PC-9 (cell line): ENCODE measurements at regions of chr11 and their contacts with region 1.

Region 1: GRCh38 chr11:123511037-123511870 is 81.2 kb downstream of the GRAMD1B start:
- DNase-seq: peak; percentile 68 to 84
- H3K4me3 ChIP-seq: no peak overlapping the region
- H3K27ac ChIP-seq: no peak overlapping the region
- H3K4me1 ChIP-seq: no peaks in the 10 kb centered on the region
- H3K27me3 ChIP-seq: no peaks in the 10 kb centered on the region
- CTCF ChIP-seq: peak; percentile 94

Region 2: DNA sequence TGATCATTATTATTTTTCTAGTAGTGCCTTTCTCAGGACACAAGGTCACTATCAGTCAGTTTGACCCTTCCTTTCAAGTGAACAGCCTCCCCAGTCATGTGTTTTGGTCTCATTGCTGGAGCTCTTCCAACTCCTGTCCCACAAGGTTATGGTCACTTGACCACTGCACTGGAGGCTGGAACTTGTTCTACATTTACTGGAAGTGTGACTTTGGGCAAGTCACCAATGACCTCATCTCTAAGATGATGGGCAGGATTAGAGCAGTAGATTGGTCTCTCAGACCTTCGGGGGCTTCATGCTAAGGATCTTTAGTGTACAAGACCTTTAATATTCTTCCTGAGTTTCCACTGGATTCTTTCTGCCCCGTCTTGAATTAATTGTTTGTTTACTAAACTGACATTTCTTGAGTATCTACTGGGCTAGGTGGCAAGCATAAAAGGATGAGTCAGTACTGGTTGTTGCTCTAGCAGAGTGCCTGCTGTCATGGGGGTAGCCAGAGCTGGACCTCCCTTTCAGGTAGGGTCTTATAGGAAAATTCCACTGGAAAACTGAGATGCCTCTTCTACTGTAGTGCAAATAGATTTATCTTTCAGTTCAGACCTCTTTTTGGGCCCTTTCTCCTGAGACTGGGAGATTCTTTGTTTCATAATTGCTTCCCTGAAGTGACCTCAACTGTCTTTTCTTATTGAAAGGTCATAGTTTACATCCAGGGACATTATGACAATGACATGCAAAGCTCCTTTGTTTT is 25.6 kb after region 1 on chr11:
- CTCF ChIA-PET with region 1: interaction called, 18 read pairs
- POLR2A ChIA-PET with region 1: no interaction called
- intact Hi-C with region 1: no loop called
- DNase-seq: no peak
- H3K4me3 ChIP-seq: no peak overlapping the region
- H3K27ac ChIP-seq: peak overlapping the region; percentile 36
- H3K4me1 ChIP-seq: peaks cover 30% of the 10 kb centered on the region
- H3K27me3 ChIP-seq: no peaks in the 10 kb centered on the region
- CTCF ChIP-seq: no peak

Region 3: DNA sequence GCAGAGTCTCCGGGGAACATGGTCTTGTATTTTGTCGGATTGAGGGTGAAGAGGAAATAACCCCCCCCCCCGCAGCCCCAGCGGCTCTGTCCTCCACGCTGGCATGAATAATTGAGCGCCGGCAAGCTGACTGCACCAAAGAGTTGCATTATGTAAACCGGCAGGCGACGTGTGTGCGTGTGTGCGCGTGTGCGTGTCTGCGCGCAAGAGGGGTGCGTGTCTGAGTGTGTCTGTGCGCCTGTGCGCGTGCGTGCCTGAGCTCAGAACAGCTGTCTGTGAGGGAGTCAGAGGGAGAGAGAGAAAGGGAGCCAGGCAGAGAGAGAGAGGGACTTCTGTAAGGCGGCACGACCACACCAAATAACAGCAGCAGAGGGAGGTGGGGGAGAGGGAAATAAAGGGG is 48.8 kb after region 1 on chr11:
- CTCF ChIA-PET with region 1: interaction called, 3 read pairs
- POLR2A ChIA-PET with region 1: no interaction called
- intact Hi-C with region 1: loop called (anchors 1 kb)
- DNase-seq: no peak
- H3K4me3 ChIP-seq: no peak overlapping the region
- H3K27ac ChIP-seq: no peak overlapping the region
- H3K4me1 ChIP-seq: no peaks in the 10 kb centered on the region
- H3K27me3 ChIP-seq: no peaks in the 10 kb centered on the region
- CTCF ChIP-seq: no peak